PC-3 (cell line): ENCODE measurements at regions of chr10 and their contacts with region 1.

Region 1: DNA sequence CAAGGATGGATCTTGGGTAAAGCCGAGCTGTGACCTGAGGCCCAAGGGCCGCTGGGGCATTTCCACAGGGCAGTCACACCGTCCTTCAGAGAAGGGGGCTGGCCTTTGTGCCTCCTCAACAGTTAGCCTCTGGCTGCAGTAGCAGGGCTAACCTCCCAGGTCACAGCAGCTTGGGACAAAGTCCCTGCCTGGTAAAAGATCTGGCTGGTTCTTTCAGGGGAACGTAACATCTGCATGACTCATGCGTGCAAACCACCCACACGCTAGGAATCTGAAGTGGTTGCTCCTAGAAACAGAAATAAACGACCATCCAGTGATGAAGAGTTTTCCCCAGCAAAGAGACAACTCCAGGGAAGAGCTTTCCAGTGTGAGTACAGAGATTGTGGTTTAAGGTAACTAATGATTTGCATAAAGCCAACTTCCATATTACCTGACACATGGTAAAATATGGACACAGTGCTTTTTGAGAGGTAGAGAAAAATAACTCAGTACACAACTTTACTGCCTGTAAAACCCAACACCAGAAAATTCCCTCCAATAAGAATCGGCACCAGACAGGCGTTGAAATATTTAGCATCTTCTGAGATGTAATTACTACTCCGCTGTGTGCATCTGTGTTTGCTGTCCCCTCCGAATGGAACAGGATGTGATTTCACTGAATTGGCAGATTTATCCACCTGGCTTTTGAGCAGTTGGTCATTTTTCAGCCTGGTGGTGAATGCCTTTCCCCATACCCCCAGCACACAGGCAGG is 84.9 kb upstream of the ADRB1 start:
- DNase-seq: peak; percentile 79
- ATAC-seq: peak; percentile 85
- H3K4me3 ChIP-seq: peak overlapping the region; percentile 34; the same call in 1 of the 2 replicates
- H3K27ac ChIP-seq: peak overlapping the region; percentile 85
- H3K4me1 ChIP-seq: peaks cover 37% of the 10 kb centered on the region
- H3K27me3 ChIP-seq: no peaks in the 10 kb centered on the region
- CTCF ChIP-seq: no peak

Region 2: DNA sequence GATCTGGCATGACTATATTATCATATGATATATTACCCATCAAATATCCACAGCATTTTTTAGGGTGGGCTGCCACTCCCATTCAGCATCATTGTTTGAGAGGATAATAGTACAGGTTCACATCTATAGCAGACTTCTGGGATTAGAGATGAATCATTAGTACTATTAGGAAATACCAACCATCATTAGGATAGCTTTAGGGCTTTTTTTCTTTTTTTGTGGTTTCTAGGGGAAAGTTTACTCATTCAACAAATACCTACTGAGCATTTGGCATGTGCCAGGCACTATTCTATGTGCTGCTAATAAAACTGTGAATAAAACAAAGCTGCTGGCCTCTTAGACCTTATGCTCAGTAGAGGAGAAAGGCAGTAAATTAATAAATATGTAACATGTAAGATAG is 63.8 kb before region 1 on chr10:
- CTCF ChIA-PET with region 1: no interaction called
- POLR2A ChIA-PET with region 1: no interaction called
- intact Hi-C with region 1: loop called (anchors 2 kb)
- DNase-seq: peak; percentile 82
- ATAC-seq: peak; percentile 95
- H3K4me3 ChIP-seq: no peak overlapping the region
- H3K27ac ChIP-seq: no peak overlapping the region
- H3K4me1 ChIP-seq: peaks cover 13% of the 10 kb centered on the region
- H3K27me3 ChIP-seq: no peaks in the 10 kb centered on the region
- CTCF ChIP-seq: no peak

Region 3: DNA sequence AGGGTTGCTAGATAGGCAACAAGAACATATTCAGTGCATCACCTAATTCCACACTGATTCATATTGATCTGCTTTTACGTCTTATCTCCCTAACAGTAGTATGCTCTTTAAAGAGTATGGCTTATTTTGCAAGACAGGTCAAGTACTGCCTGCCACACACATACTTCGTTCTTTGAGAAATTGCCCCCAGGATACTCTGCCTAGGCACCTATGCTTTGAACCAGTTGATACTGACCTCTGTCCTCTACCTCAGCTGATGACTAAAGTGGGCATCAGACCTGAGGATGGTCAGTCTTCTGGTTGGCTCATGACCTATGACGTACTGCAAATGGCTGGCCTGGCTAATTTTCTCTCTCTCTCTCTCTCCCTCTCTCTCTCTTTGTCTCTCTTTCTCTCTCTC is 17.5 kb after region 1 on chr10:
- CTCF ChIA-PET with region 1: no interaction called
- POLR2A ChIA-PET with region 1: no interaction called
- intact Hi-C with region 1: no loop called
- DNase-seq: no peak
- ATAC-seq: no peak
- H3K4me3 ChIP-seq: no peak overlapping the region
- H3K27ac ChIP-seq: no peak overlapping the region
- H3K4me1 ChIP-seq: no peaks in the 10 kb centered on the region
- H3K27me3 ChIP-seq: no peaks in the 10 kb centered on the region
- CTCF ChIP-seq: no peak

Region 4: GRCh38 chr10:114009281-114009996 is 50.6 kb after region 1 on chr10:
- CTCF ChIA-PET with region 1: no interaction called
- POLR2A ChIA-PET with region 1: no interaction called
- intact Hi-C with region 1: loop called (anchors 1 kb)
- DNase-seq: peak; percentile 51
- ATAC-seq: peak; percentile 70
- H3K4me3 ChIP-seq: no peak overlapping the region
- H3K27ac ChIP-seq: peak overlapping the region; percentile 37
- H3K4me1 ChIP-seq: peaks cover 14% of the 10 kb centered on the region
- H3K27me3 ChIP-seq: no peaks in the 10 kb centered on the region
- CTCF ChIP-seq: no peak